Mucosa of descending colon (tissue), 3 donors: ENCODE measurements at regions of chr9 and their contacts with region 1.

Region 1: DNA sequence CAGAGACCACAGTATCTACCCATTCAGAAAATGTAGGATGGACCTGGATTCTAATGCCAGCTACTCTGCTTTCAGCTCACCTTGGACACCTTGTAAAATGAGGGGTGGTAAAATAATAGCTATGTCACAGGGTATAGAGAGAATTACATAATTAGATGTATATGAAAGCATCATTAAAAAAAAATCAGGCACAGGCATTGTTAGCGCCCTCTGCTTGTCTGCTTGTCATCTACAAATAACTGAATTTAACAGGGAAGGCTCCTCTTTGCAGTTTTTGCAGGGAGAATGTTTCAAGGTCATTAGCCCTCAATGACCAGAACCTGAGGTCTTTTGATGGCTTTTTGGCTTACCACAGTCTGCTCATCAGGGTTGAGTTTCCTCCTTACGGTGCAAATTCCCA is 58.0 kb downstream of the GPR21 start:
- DNase-seq: no peak
- ATAC-seq: no peak
- H3K4me3 ChIP-seq: no peak overlapping the region
- H3K4me1 ChIP-seq: no peaks in the 10 kb centered on the region
- CTCF ChIP-seq: no peak

Region 2: GRCh38 chr9:123349691-123350480 is 258.4 kb after region 1 on chr9:
- intact Hi-C with region 1: loop called in 1 of 2 experiments (anchors 10 kb)
- DNase-seq: peak in 2 of 3 donors; percentile 49 to 80
- ATAC-seq: peak; percentile 81
- H3K4me3 ChIP-seq: no peak overlapping the region
- H3K4me1 ChIP-seq: peaks cover 6% of the 10 kb centered on the region
- CTCF ChIP-seq: peak; percentile 79

Region 3: DNA sequence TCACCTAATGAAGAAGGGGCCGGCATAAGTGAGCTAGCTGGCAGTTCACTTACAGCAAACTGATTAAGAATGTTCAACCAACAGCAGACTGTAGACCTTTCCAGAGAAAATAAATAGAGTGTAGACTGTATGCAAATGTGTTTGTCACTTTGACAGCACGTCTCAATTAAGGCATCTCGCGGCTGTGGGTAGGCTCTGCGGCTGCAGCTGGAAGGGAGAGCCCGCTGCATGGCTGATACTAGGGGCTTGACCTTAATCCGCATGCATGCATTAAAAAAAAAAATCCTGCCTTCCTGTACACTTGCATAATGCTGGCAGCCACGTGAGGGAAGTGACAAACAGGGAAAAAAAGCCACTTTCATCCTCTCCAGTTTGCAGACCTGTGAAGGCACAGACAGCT is 346.9 kb after region 1 on chr9:
- intact Hi-C with region 1: no loop called
- DNase-seq: no peak
- ATAC-seq: no peak
- H3K4me3 ChIP-seq: no peak overlapping the region
- H3K4me1 ChIP-seq: no peaks in the 10 kb centered on the region
- CTCF ChIP-seq: no peak